ENCODE measurements at regions of chr4 and their contacts with region 1.

Region 1: DNA sequence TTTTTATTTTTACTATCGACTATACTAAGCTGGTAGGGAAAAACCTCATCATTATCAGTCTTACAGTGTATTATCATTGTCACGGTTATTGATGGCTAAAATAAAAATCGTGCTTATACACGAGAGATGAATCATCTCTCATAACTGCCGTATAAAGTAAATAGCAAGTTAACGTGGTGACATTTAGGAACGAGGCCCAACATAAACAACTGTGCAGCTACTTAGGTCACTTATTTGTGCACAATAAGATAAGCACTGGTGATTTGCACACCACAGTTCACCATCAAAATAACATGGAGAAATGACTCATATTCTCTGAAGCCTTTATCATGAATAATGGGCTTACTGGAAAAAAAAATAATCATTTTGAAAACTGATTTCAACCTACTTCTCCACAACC is 482.0 kb upstream of the TENM3 start:
- DNase-seq: no peak
- H3K4me3 Mint-ChIP-seq: no peak overlapping the region
- H3K27ac Mint-ChIP-seq: no peak overlapping the region
- H3K4me1 Mint-ChIP-seq: no peaks in the 10 kb centered on the region
- H3K27me3 Mint-ChIP-seq: no peaks in the 10 kb centered on the region
- CTCF ChIP-seq: no peak

Region 2: DNA sequence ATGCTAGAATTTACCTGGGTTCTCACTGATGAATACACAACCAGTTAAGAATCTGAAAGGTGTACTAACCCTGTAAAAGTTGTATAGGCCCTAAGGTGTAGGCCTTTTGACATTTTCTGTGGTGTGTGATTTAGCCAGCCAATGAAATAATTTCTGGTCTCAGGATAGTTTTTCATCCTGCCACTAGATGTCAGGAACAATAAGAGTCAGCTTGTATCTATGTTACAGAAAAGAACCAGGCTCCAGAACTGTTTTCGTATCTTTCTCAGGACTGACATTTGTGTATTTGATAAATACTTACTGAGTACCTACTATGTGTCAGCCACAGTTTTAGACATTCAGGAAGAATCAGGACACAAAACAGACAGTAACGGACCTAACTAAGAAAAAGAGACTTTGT is 191.6 kb before region 1 on chr4:
- CTCF ChIA-PET with region 1: no interaction called
- intact Hi-C with region 1: loop called (anchors 10 kb)
- DNase-seq: no peak
- H3K4me3 Mint-ChIP-seq: no peak overlapping the region
- H3K27ac Mint-ChIP-seq: no peak overlapping the region
- H3K4me1 Mint-ChIP-seq: peaks cover 9% of the 10 kb centered on the region
- H3K27me3 Mint-ChIP-seq: no peaks in the 10 kb centered on the region
- CTCF ChIP-seq: no peak

Measured in Calu3 (cell line).